ENCODE measurements at regions of chr2 and their contacts with region 1.

Region 1: DNA sequence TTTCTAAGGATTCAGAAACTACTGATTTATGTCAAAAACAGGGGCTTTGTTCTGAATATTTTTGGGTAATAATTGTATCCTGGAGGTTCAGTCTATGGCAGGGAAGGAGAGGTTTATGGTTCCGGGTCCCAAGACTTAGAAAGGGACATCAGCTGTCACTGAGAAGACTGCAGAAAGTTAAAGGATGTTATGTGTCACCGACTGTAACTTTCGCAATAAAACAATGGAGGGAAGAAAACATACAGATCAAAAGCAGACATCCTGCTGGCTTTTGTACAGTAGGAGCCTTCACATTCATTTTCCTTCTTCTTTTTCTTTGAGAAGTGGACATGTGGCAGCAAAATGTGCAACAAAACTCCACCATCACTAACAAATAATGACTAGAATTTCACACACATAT is 900.7 kb upstream of the SOX11 start:
- DNase-seq: no peak
- H3K4me3 ChIP-seq: no peak overlapping the region
- H3K4me3 Mint-ChIP-seq: no peak overlapping the region
- H3K27ac ChIP-seq: no peak overlapping the region
- H3K27ac Mint-ChIP-seq: no peak overlapping the region
- H3K4me1 ChIP-seq: no peaks in the 10 kb centered on the region
- H3K4me1 Mint-ChIP-seq: no peaks in the 10 kb centered on the region
- H3K27me3 ChIP-seq: no peaks in the 10 kb centered on the region
- H3K27me3 Mint-ChIP-seq: no peaks in the 10 kb centered on the region
- CTCF ChIP-seq: no peak

Region 2: DNA sequence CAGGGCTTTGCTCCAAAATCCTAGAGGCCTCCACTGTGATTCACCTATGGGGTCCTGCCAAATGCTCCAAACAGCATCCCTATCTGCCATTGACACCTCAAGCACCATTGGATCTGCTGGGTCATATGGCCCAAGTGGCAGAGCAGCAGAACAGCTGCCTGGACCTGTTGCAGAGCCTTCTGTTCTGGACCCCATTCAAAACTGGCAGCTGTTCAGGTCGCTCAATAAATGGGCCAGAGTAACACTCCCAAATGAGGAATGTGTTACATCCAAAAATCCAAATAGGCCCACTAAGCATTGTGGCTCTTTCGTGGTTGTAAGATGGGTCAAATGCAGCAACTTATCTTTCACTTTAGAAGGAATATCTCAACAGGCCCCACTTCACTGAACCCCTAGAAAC is 304.5 kb before region 1 on chr2:
- intact Hi-C with region 1: no loop called
- DNase-seq: no peak
- H3K4me3 ChIP-seq: no peak overlapping the region
- H3K4me3 Mint-ChIP-seq: no peak overlapping the region
- H3K27ac ChIP-seq: no peak overlapping the region
- H3K27ac Mint-ChIP-seq: no peak overlapping the region
- H3K4me1 ChIP-seq: no peaks in the 10 kb centered on the region
- H3K4me1 Mint-ChIP-seq: no peaks in the 10 kb centered on the region
- H3K27me3 ChIP-seq: no peaks in the 10 kb centered on the region
- H3K27me3 Mint-ChIP-seq: no peaks in the 10 kb centered on the region
- CTCF ChIP-seq: no peak

Region 3: GRCh38 chr2:4693266-4693812 is 98.1 kb before region 1 on chr2:
- intact Hi-C with region 1: no loop called
- DNase-seq: no peak
- H3K4me3 ChIP-seq: no peak overlapping the region
- H3K4me3 Mint-ChIP-seq: no peak overlapping the region
- H3K27ac ChIP-seq: no peak overlapping the region
- H3K27ac Mint-ChIP-seq: no peak overlapping the region
- H3K4me1 ChIP-seq: no peaks in the 10 kb centered on the region
- H3K4me1 Mint-ChIP-seq: no peaks in the 10 kb centered on the region
- H3K27me3 ChIP-seq: no peaks in the 10 kb centered on the region
- H3K27me3 Mint-ChIP-seq: no peaks in the 10 kb centered on the region
- CTCF ChIP-seq: no peak

Region 4: GRCh38 chr2:6443061-6443823 is 1651.8 kb after region 1 on chr2:
- intact Hi-C with region 1: loop called in 1 of 2 experiments (anchors 10 kb)
- DNase-seq: no peak
- H3K4me3 ChIP-seq: no peak overlapping the region
- H3K4me3 Mint-ChIP-seq: no peak overlapping the region
- H3K27ac ChIP-seq: no peak overlapping the region
- H3K27ac Mint-ChIP-seq: no peak overlapping the region
- H3K4me1 ChIP-seq: no peaks in the 10 kb centered on the region
- H3K4me1 Mint-ChIP-seq: no peaks in the 10 kb centered on the region
- H3K27me3 ChIP-seq: no peaks in the 10 kb centered on the region
- H3K27me3 Mint-ChIP-seq: peaks cover 0 to 1% (median 0%) of the 10 kb centered on the region in 3 donors
- CTCF ChIP-seq: no peak